Sigmoid colon (tissue), 7 donors: ENCODE measurements at regions of chr2 and their contacts with region 1.

Region 1: DNA sequence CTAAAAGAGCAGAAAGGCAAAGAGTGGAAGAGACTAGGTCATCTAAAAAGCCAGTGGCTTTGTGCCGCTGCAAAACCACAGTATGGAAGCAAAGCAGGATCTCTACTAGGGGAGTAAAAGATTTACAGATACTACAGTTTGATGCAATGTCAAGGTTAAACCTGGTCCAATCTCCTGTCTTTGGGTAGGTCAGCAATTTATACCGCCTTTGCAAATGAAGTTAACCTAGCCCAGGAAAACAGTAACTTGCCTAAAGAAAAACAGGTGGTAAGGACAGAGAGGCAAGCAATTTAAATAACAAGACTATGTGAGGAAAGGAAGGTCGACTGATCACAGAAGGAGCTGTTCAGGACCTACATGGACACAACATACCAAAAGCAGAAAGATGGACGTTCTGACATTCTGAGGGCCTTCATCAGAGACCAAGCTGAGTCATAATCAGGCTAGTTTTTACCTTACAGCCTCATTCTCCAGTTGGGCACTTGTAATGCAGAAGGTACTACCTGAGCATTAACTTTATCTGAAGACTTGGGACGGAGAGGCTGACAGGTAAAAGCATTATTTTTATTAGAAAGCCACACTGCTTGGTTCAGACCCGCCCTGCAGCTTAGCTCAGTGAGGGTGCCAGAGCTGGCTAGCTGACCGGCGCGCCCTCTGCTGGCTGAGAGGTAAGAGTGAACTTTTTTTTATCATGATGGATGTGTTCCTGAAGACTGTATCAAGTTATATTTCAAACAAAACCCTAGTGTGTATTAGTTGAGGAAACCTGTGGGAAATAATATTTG is 15.9 kb downstream of the CDKL4 start:
- DNase-seq: peak; percentile 88
- H3K4me3 ChIP-seq: peak overlapping the region in 3 of 4 donors; percentile 20 to 32 (median 30)
- H3K27ac ChIP-seq: no peak overlapping the region
- H3K4me1 ChIP-seq: peaks cover 0 to 31% (median 18%) of the 10 kb centered on the region in 4 donors
- H3K27me3 ChIP-seq: no peaks in the 10 kb centered on the region
- CTCF ChIP-seq: peak; percentile 61 to 83 (median 80)
- EP300 ChIP-seq: no peak
- POLR2A ChIP-seq: no peak

Region 2: DNA sequence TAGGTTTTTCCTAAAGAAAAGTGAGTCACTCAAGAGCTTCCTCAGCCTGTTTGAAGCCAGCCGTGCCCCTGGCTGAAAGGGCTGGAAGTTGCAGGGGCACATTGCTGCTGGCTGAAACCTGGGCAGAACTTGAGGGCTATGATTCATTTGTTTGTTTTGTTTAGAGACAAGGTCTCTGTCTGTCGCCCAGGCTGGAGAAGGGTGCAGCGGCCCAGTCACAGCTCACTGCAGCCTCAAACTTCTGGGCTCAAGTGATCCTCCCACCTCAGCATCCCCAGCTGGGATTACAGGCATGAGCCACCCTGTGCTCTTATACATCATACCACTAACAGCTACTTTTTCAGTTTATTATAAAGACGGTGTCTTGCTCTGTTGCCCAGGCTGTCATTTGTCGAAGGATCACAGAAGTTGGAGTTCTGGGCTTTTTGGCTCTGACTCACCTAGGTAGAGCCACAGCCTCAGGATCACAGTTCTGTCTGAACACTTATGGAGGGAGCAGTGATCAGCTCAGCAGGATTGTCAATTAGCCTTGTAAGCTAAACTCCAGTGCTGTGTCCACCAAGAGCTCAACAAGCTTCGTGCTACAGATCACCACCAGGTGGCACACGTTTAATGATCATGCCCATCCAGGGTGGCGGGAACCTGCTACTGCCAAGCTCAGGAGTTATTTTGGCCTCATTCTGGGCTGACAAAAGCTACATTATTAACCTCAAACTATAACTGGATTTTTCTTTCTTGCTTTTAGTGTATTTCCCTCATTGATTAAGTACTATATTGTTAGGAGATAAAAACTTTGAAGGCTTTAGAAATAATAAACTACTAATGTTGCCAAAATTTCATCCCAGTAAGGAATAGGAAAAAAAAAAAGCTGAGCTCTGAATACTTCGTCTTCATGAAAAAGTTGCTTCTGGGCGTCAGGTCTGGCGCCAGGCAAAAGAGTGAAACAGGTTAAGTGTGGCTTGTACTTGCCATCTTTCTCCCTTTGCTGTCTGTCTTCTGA is 280.3 kb before region 1 on chr2:
- intact Hi-C with region 1: loop called (anchors 2 kb)
- DNase-seq: peak; percentile 79
- H3K4me3 ChIP-seq: no peak overlapping the region
- H3K27ac ChIP-seq: no peak overlapping the region
- H3K4me1 ChIP-seq: no peaks in the 10 kb centered on the region
- H3K27me3 ChIP-seq: no peaks in the 10 kb centered on the region
- CTCF ChIP-seq: peak; percentile 19 to 63 (median 50)
- EP300 ChIP-seq: no peak
- POLR2A ChIP-seq: no peak

Region 3: GRCh38 chr2:39059366-39059952 is 168.4 kb before region 1 on chr2:
- intact Hi-C with region 1: loop called (anchors 1 kb)
- DNase-seq: no peak
- H3K4me3 ChIP-seq: no peak overlapping the region
- H3K27ac ChIP-seq: no peak overlapping the region
- H3K4me1 ChIP-seq: peaks cover 0 to 12% (median 0%) of the 10 kb centered on the region in 4 donors
- H3K27me3 ChIP-seq: no peaks in the 10 kb centered on the region
- CTCF ChIP-seq: peak in 3 of 4 experiments; percentile 28 to 68 (median 55)
- EP300 ChIP-seq: no peak
- POLR2A ChIP-seq: no peak

Region 4: DNA sequence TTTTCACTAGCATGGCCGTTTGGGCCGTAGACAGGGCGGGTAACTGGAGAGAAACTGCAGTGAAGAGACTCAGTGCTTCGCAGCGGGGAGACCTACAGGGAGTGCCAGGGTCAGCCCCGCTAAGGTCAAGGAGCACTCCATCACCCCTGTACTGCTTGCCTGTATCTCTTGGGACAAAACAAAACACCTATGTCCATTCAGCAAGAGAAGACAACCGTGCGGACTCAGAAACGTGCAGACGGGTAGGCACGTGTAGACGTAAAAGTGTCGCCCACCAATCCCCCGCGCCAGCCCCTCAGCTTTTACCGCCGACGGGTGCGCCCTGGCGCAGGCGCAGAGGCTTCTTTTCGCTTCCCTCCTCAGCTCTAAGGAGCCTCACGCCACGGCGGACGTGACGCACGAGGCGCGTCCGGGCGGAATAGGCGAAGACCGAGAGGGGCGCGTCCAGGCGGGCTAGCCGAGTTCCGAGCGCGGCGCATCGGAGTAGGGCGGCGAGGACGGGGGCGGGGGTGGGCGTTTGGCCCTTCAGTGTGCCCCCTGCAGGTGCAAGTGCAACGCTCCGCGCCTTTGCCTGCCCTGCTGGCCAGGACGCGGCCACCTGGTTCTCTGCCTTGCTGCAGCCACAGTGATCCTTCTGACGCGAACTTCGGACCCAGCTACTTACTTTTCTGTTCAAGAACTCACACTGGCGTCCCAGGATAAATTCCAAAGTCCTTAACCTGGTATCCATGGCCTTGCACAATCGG is 103.6 kb before region 1 on chr2:
- intact Hi-C with region 1: loop called (anchors 1 kb)
- DNase-seq: peak; percentile 97
- H3K4me3 ChIP-seq: peak overlapping the region; percentile 57 to 73 (median 64)
- H3K27ac ChIP-seq: peak overlapping the region; percentile 91 to 97 (median 96)
- H3K4me1 ChIP-seq: peaks cover 0 to 33% (median 25%) of the 10 kb centered on the region in 4 donors
- H3K27me3 ChIP-seq: no peaks in the 10 kb centered on the region
- CTCF ChIP-seq: peak in 2 of 4 experiments; percentile 23 to 53
- EP300 ChIP-seq: peak in 1 of 4 donors; percentile 78
- POLR2A ChIP-seq: peak; percentile 83 to 91